ENCODE measurements at regions of chr9 and their contacts with region 1.

Region 1: DNA sequence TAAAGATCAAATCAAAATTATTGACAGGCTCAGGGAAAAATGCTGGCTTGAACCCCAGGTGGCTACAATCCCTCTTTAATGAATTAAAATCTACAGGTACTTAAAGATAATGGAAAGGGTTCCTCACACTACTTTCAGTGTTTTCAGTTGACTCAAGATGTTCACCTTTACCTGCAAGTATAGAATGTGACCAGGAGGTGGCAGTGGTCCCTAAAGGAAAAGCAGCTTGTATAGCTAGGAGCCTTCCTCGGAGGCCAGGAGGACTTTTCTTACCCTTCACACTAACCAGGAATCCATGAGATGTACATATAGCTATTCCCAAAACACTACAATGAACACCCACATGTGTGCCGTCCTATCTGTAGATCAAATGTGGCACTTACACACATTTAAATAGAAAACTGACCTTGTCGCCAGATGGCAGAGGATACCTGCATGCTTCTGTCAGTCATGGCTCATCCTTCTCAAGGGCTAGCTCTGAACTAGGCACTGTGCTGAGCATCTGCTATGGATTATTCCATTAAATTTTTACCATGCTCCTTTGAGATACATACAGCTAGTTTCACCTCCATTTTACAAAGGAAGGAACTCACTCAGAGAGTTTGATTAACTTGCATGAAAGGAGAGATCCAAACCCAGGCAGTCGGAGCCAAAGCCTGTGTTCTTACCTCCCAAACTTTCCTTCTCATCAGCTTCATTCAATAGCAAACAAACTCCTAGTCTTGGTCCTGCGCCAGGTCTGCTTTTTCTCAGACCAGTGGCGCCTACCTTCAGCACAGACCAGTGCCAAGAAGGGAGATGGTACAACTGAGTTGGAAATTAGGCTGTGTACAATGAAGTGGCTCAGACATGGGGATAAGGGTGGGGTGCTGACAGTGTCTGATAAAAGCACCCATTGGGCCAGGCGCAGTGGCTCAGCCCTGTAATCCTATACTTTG is 24.5 kb downstream of the C9orf152 start:
- DNase-seq: peak; percentile 71
- ATAC-seq: peak; percentile 78
- H3K4me3 Mint-ChIP-seq: no peak overlapping the region
- H3K27ac Mint-ChIP-seq: no peak overlapping the region
- H3K4me1 Mint-ChIP-seq: no peaks in the 10 kb centered on the region
- H3K27me3 Mint-ChIP-seq: no peaks in the 10 kb centered on the region
- CTCF ChIP-seq: peak; percentile 79

Region 2: DNA sequence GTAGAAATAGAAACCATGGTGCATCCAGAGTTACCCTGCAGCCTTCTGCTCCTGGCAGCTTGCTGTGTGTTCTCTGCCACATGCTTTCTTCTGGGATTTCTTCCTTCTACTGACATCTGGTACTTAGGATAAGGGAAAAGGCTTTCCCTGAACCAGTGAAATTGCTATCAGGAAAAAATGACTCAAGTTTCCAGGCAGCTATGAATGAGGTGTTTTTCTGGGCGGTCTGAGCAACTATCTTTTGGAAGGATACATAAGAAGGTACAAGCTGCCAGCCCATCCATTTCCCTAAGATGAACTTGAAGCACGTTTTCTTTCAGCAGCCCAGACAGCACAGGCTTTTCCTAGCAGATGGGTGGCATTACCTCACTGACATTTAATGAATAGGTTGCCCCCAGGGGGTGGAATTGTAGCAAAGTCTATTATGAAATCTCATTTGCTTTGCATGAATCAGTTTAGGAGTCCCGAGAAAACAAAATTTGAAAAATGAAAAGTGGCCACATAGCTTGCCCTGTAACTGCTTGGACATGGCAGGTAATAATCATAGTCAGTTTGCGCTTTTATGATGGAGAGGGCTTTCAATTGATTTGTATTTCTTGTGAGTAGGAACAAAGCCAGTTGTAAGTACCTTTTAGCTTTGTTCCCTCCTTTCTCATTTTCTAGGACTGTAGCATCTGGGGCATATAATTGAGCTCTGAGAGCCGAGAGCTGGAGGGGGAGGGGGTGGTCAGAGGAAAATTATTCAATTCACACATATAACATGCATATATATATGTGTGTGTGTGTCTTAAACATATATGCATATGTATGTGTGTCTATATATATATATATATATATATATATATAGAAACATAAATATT is 84.0 kb before region 1 on chr9:
- CTCF ChIA-PET with region 1: no interaction called
- POLR2A ChIA-PET with region 1: no interaction called
- intact Hi-C with region 1: no loop called
- DNase-seq: no peak
- ATAC-seq: no peak
- H3K4me3 Mint-ChIP-seq: no peak overlapping the region
- H3K27ac Mint-ChIP-seq: no peak overlapping the region
- H3K4me1 Mint-ChIP-seq: no peaks in the 10 kb centered on the region
- H3K27me3 Mint-ChIP-seq: no peaks in the 10 kb centered on the region
- CTCF ChIP-seq: no peak

Region 3: DNA sequence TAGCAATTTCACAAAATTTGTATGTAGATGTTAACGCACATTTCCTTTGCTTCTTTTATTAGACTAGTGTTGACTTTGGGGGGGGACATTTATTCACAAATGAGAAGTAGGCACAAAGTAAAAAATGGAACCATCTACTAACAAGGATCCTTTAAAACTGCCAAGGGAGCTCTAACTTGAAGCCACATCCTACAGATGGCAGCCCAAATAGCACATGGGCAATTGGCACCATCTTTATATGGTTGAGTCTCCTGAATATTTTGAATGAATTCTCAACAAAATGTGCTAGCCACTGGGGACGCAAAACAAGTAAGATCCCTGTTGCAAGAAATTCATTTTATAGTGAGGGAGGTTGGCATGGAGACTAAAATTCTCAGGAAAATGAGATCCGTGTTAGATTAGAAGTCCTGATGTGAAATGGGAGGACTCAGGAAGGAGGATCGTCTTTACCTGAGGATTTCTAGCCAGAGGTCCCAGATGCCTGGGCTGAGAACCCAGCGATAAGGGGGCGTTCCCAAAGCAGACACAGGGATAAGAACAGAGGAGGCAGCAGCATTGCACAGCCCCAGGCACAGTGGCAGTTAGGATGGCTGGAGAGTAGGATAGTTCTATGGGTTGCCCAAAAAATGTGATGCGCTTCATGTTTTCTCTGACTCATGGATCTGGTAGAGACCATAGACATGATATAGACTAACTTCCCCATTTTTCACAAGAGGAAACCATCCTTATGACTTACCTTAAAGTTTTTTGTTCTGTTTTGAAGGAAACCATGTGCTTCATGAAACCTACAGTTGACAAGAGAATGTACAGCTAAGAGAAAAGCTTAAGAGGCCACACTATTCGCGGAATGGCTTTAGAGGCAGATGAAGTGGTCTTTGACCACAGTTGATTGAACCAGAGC is 12.9 kb before region 1 on chr9:
- CTCF ChIA-PET with region 1: interaction called, 12 read pairs
- POLR2A ChIA-PET with region 1: interaction called, 3 read pairs
- intact Hi-C with region 1: no loop called
- DNase-seq: no peak
- ATAC-seq: no peak
- H3K4me3 Mint-ChIP-seq: no peak overlapping the region
- H3K27ac Mint-ChIP-seq: no peak overlapping the region
- H3K4me1 Mint-ChIP-seq: peaks cover 8% of the 10 kb centered on the region
- H3K27me3 Mint-ChIP-seq: no peaks in the 10 kb centered on the region
- CTCF ChIP-seq: no peak

Region 4: DNA sequence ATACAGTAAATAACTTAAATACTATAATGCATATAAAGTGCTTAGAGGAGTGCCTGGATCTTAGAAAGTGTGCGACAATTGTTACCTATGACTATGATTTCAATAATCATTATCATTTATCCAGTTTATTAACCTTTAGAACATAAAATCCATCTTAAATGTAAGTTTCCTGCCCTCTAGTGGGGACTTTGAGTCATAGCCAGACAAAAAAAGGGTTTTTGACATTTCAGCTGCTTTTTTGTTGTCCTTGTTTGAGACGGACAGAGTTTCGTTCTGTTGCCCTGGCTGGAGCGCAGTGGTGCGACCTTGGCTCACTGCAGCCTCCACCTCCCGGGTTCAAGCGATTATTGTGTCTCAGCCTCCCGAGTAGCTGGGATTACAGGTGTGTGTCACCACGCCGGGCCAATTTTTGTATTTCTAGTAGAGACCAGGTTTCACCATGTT is 34.2 kb after region 1 on chr9:
- CTCF ChIA-PET with region 1: interaction called, 41 read pairs
- POLR2A ChIA-PET with region 1: no interaction called
- intact Hi-C with region 1: loop called (anchors 5 kb)
- DNase-seq: no peak
- ATAC-seq: no peak
- H3K4me3 Mint-ChIP-seq: no peak overlapping the region
- H3K27ac Mint-ChIP-seq: no peak overlapping the region
- H3K4me1 Mint-ChIP-seq: no peaks in the 10 kb centered on the region
- H3K27me3 Mint-ChIP-seq: peaks cover 4% of the 10 kb centered on the region
- CTCF ChIP-seq: peak; percentile 57

Region 5: GRCh38 chr9:110334183-110334582 is 150.7 kb after region 1 on chr9:
- CTCF ChIA-PET with region 1: no interaction called
- POLR2A ChIA-PET with region 1: no interaction called
- intact Hi-C with region 1: no loop called
- DNase-seq: no peak
- ATAC-seq: no peak
- H3K4me3 Mint-ChIP-seq: no peak overlapping the region
- H3K27ac Mint-ChIP-seq: no peak overlapping the region
- H3K4me1 Mint-ChIP-seq: no peaks in the 10 kb centered on the region
- H3K27me3 Mint-ChIP-seq: peaks cover 2% of the 10 kb centered on the region
- CTCF ChIP-seq: no peak

Region 6: DNA sequence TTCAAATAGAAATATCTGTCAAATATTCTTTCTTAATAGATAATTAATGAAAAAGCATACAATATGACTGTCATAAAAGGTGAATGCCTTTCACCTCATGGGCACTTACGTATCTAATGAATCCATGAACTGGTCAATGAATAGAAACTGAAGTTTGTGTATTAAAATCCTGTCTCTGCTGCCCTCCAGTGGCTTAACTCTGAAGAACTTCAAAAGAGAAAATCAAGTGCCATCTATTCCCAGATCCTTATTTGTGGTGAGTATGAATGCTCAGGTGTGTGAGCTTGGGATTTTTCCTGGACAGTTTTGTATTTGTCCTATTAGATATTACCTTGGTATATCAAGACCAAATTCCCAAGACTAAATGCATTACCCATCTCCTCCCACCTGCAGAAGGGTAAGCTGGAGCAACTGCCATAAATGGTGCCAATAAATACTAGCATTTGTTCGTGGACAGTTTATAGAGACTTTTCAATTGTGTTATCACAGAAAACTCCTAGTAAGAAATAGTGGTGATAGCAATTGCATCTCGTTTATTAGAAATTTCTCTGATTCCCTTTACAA is 440.1 kb after region 1 on chr9:
- CTCF ChIA-PET with region 1: interaction called, 24 read pairs
- POLR2A ChIA-PET with region 1: no interaction called
- intact Hi-C with region 1: loop called (anchors 2 kb)
- DNase-seq: peak; percentile 32
- ATAC-seq: no peak
- H3K4me3 Mint-ChIP-seq: no peak overlapping the region
- H3K27ac Mint-ChIP-seq: no peak overlapping the region
- H3K4me1 Mint-ChIP-seq: peaks cover 11% of the 10 kb centered on the region
- H3K27me3 Mint-ChIP-seq: no peaks in the 10 kb centered on the region
- CTCF ChIP-seq: peak; percentile 69